Activated B cell treated with CpG ODN at 0.5 μM for 24 hours (primary cell): ENCODE measurements at regions of chrX and their contacts with region 1.

Region 1: DNA sequence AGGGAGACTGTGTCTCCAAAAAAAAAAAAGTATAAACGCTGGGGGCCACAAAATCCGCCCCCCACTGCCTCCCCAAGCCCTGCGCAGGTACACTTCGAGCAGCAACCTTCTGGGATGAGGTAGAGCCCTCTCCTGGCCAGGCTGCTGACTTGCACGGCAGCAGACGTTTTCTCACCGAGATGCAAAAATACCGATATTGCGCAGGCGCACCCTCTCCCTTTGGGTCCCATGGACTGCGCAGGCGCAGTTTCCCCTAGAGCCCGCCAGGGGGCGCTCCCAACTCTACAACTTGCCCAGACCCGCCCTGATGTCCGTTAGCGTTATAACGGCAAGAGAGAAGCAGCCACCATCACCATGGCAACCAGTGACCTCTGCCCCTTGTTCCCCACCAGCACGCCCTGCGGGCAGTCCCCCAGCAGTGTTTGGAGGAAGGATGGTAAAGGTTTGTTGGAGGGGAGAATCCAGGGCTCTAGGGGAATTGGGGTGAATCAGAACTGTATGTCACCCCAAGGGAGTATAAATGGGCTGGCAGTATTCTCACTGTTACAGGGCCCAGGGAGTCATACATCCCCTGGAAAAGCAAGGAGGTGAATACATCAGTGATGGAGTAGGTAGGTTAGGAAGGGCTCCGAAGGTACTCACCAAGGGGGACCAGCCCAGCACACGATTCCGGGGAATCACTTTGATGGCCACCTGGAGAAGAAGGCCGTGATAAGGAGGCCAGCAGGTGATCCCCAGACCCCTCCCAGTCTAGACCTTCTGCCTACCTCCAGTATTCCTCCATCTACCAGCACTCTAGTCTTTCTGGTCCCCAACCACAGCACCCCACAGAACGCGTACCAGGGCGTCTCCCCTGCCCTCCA is 1.5 kb downstream of the PIM2 start:
- DNase-seq: peak; percentile 71
- ATAC-seq: peak; percentile 46
- H3K4me3 Mint-ChIP-seq: peak overlapping the region; percentile 97
- H3K27ac Mint-ChIP-seq: peak overlapping the region; percentile 95
- H3K4me1 Mint-ChIP-seq: peaks cover 54% of the 10 kb centered on the region
- H3K27me3 Mint-ChIP-seq: no peaks in the 10 kb centered on the region
- CTCF ChIP-seq: peak; percentile 22

Region 2: DNA sequence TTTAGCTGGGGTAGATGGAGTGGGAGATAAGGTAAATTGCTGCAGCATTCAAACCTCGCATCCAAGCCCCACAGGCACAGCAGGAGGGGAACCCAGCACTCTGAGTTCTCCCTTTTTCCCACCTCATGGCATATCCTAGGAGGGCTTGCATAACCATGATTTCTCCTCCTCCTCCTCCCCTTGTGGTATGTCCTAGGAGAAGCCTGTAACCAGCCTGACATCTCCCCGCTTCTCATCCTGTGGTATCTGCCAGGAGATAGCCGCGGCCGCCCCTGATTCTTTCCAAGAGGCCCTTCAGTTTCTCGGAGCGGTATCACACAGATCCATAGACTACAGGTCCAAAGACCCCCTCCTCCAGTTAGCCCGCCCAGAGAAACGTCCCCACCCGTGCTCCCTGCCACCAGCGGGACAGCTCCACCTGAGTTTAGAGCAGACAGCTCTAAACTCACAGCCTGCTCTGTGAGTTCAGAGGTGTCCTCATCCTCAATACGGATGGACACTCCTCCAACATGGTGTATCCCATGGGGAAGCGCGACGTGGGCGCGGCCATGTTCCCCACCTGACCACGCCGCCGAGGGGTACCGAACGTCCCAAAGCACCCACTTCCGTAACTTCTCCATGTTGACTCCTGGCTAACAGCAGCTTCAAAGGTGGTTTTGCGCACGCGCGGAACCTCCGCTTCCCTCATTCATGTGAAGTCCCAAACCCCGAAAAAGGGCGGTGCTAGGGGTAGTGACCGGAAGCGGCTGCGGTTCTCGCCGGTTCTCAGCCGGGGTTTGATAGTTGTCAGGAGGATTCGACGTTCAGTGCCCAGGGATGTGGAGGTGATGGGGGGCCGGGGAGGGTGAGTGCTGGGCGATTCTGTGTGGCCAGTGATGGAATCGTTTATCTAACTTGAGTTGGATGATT is 1081.0 kb before region 1 on chrX and contains the start of gene ZNF81:
- CTCF ChIA-PET with region 1: no interaction called
- POLR2A ChIA-PET with region 1: no interaction called
- intact Hi-C with region 1: loop called (anchors 10 kb)
- DNase-seq: peak; percentile 76
- ATAC-seq: peak; percentile 95
- H3K4me3 Mint-ChIP-seq: peak within 1 kb of the TSS; percentile 93
- H3K27ac Mint-ChIP-seq: peak within 1 kb of the TSS; percentile 93
- H3K4me1 Mint-ChIP-seq: peaks cover 21% of the 10 kb centered on the region
- H3K27me3 Mint-ChIP-seq: no peaks in the 10 kb centered on the region
- CTCF ChIP-seq: no peak
- total RNA-seq, gene ZNF81: 11.0 and 15.3 TPM in 2 replicates

Region 3: GRCh38 chrX:48696301-48697181 is 220.8 kb before region 1 on chrX and contains the start of gene SUV39H1:
- CTCF ChIA-PET with region 1: no interaction called
- POLR2A ChIA-PET with region 1: no interaction called
- intact Hi-C with region 1: loop called (anchors 1 kb)
- DNase-seq: peak; percentile 70
- ATAC-seq: peak; percentile 96
- H3K4me3 Mint-ChIP-seq: peak within 1 kb of the TSS; percentile 88
- H3K27ac Mint-ChIP-seq: peak within 1 kb of the TSS; percentile 91
- H3K4me1 Mint-ChIP-seq: peaks cover 19% of the 10 kb centered on the region
- H3K27me3 Mint-ChIP-seq: no peaks in the 10 kb centered on the region
- CTCF ChIP-seq: no peak
- total RNA-seq, gene SUV39H1: 9.1 and 10.8 TPM in 2 replicates

Region 4: GRCh38 chrX:48897621-48898306 is 19.6 kb before region 1 on chrX and contains the starts of genes PQBP1 and TIMM17B:
- CTCF ChIA-PET with region 1: interaction called, 3 read pairs
- POLR2A ChIA-PET with region 1: interaction called, 55 read pairs
- intact Hi-C with region 1: loop called (anchors 1 kb)
- DNase-seq: peak; percentile 73
- ATAC-seq: peak; percentile 86
- H3K4me3 Mint-ChIP-seq: peak within 1 kb of the TSS; percentile 94
- H3K27ac Mint-ChIP-seq: peak within 1 kb of the TSS; percentile 97
- H3K4me1 Mint-ChIP-seq: peaks cover 29% of the 10 kb centered on the region
- H3K27me3 Mint-ChIP-seq: no peaks in the 10 kb centered on the region
- CTCF ChIP-seq: no peak
- total RNA-seq, gene PQBP1: 81.6 and 91.5 TPM in 2 replicates
- total RNA-seq, gene TIMM17B: 47.8 and 52.6 TPM in 2 replicates

Region 5: DNA sequence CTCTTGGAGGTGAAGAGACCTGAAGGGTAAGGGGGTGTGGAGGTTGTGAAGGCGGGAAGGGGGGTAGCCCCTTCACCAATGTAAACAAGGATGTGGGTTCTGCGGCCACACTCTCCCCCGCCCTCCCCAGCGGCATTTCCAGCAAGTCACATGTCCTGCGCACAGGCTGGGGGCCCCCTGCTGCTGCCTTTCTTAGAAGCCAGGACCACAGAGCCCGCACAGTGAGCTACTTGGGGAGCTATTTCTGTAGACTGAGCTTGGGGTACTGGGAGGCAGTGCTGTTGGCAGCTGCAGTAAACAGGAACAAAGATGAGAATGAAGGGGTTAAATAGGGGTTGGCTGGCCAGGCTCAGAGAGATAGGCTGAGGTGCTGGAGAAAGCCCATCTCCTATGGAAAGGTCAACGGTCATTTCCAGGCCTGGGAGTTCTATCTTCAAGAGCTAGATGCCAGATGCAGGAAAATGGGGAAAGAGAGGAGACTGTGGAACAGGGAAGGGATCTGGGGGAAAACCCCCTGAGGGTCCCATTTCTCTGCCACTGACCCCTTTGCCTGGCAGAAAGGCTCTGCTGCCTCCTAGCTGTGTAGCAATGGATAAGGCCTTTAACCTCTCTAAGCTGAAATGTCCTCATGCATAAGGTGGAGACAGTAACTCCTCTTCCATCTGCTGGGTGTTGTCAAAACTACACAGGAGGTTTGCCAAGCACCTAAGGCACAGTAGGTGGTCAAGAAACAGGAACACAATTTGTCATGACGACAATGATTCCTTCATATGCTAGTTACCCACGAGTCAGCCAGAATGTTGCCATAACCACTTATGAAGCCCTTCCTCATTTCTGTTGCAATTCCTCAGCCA is 19.9 kb after region 1 on chrX:
- CTCF ChIA-PET with region 1: interaction called, 14 read pairs
- POLR2A ChIA-PET with region 1: interaction called, 718 read pairs
- intact Hi-C with region 1: loop called (anchors 1 kb)
- DNase-seq: peak; percentile 68
- ATAC-seq: peak; percentile 54
- H3K4me3 Mint-ChIP-seq: peak overlapping the region; percentile 77
- H3K27ac Mint-ChIP-seq: peak overlapping the region; percentile 98
- H3K4me1 Mint-ChIP-seq: peaks cover 87% of the 10 kb centered on the region
- H3K27me3 Mint-ChIP-seq: no peaks in the 10 kb centered on the region
- CTCF ChIP-seq: no peak

Region 6: GRCh38 chrX:49002091-49002935 is 84.9 kb after region 1 on chrX and contains the start of gene GRIPAP1:
- CTCF ChIA-PET with region 1: no interaction called
- POLR2A ChIA-PET with region 1: interaction called, 6 read pairs
- intact Hi-C with region 1: loop called (anchors 5 kb)
- DNase-seq: peak; percentile 52
- ATAC-seq: peak; percentile 88
- H3K4me3 Mint-ChIP-seq: peak within 1 kb of the TSS; percentile 99
- H3K27ac Mint-ChIP-seq: peak within 1 kb of the TSS; percentile 97
- H3K4me1 Mint-ChIP-seq: peaks cover 24% of the 10 kb centered on the region
- H3K27me3 Mint-ChIP-seq: no peaks in the 10 kb centered on the region
- CTCF ChIP-seq: no peak
- total RNA-seq, gene GRIPAP1: 97.3 and 117 TPM in 2 replicates